ENCODE measurements at regions of chr10 and their contacts with region 1.

Region 1: DNA sequence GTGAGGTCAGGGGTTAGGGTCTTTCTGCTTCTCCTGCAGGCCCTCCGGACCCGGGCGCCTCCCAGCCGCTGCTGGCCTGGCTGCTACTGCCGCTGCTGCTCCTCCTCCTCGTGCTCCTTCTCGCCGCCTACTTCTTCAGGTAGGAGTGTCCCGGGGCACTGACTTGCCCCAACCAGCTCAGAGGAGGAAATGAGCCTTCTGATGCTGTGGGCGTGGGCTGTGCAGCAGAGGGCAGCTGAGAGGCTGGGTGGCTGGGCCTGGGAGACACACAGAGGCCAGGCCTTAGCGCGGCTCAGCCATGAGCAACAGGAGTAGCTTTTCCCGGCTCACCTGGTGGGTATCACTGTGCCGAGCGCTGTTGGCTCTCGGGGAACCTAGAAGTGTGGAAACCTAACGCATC is 78.9 kb downstream of the MKI67 start:
- DNase-seq: peak; percentile 52 to 90 (median 81)
- ATAC-seq: peak; percentile 97 to 98 (median 98)
- H3K4me3 ChIP-seq: peak overlapping the region; percentile 57 to 64
- H3K4me3 Mint-ChIP-seq: peak overlapping the region; percentile 84 to 95 (median 93)
- H3K27ac ChIP-seq: peak overlapping the region; percentile 93
- H3K27ac Mint-ChIP-seq: peak overlapping the region; percentile 92 to 97
- H3K4me1 ChIP-seq: peaks cover 16 to 67% of the 10 kb centered on the region in 2 experiments
- H3K4me1 Mint-ChIP-seq: peaks cover 59 to 73% (median 63%) of the 10 kb centered on the region in 3 donors
- H3K27me3 ChIP-seq: no peaks in the 10 kb centered on the region
- H3K27me3 Mint-ChIP-seq: no peaks in the 10 kb centered on the region

Region 2: DNA sequence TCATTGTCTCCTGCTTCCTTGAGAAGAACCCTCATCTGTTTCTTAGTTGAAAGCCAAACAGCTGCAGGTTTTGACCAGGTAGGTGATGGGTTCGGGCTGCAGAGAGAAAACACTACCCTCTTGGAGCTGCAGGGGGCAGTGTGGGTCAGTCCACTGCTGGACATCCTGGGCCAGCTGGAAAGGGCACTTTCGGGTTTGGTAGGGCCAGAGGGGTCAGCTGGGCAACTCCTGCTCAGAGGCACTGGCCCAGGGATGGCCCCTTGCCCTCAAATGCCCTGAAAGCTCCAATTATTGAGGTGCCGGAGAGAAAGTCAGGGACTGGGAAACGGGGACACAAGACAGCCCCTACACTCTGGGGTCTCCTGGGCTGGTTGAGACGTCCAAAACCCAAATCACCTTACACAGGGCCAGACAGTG is 11.8 kb before region 1 on chr10:
- CTCF ChIA-PET with region 1: interaction called, 6 to 15 read pairs
- POLR2A ChIA-PET with region 1: interaction called in 1 of 2 experiments, 9 read pairs
- DNase-seq: peak in 30 of 35 experiments; percentile 17 to 78 (median 52)
- ATAC-seq: peak; percentile 65 to 77 (median 72)
- H3K4me3 ChIP-seq: no peak overlapping the region
- H3K4me3 Mint-ChIP-seq: no peak overlapping the region
- H3K27ac ChIP-seq: no peak overlapping the region
- H3K27ac Mint-ChIP-seq: no peak overlapping the region
- H3K4me1 ChIP-seq: peaks cover 0 to 4% of the 10 kb centered on the region in 2 experiments
- H3K4me1 Mint-ChIP-seq: peaks cover 0 to 5% (median 2%) of the 10 kb centered on the region in 3 donors
- H3K27me3 ChIP-seq: no peaks in the 10 kb centered on the region
- H3K27me3 Mint-ChIP-seq: no peaks in the 10 kb centered on the region

Region 3: DNA sequence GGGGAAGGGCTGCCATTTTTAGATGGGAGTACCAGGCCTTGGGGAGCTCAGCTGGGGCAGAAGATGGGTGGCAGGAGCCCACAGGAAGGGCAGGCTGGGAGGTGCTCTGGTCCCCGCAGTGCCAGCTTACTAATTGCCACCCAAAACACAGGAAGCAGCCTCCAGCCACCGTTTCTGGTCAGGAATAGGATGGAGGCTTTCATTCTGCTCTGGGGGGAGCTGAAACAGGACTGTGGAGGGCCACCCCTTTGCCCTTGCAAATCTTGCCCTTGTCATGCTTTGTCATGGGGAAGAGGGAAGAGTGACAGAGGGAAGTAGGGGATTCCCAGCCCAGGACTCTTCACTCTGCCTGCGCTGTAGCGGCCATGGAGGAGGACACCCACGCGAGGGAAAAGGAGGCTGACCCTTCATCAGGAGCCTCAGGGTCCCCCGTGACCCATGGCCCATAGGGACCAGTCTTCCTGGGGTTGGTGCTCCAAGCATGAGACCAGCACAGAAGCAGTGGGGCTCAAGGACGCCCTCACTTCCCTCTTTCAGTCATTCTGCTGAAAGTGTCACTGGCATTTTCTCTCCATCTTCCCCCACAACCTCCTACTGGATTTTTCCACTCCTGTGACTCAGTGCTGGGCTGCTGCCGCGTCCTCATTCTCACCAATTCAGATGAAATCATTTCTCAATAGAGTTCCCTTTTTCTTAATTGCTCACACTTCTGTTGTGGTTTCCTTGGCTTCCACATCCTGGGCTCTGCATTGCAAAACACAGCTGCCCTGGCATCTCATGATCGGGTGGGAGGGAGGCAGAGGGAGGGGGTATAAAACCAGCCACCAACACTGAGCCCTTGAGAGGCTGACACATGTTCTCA is 17.0 kb after region 1 on chr10:
- CTCF ChIA-PET with region 1: interaction called, 12 to 22 read pairs
- POLR2A ChIA-PET with region 1: interaction called, 17 to 62 read pairs
- DNase-seq: peak in 34 of 35 experiments; percentile 46 to 82 (median 70)
- ATAC-seq: peak; percentile 70 to 74 (median 72)
- H3K4me3 ChIP-seq: peak overlapping the region; percentile 27 to 44
- H3K4me3 Mint-ChIP-seq: peak overlapping the region; percentile 37 to 80 (median 73)
- H3K27ac ChIP-seq: peak overlapping the region; percentile 81
- H3K27ac Mint-ChIP-seq: peak overlapping the region; percentile 88 to 91
- H3K4me1 ChIP-seq: peaks cover 37 to 88% of the 10 kb centered on the region in 2 experiments
- H3K4me1 Mint-ChIP-seq: peaks cover 76 to 81% (median 77%) of the 10 kb centered on the region in 3 donors
- H3K27me3 ChIP-seq: no peaks in the 10 kb centered on the region
- H3K27me3 Mint-ChIP-seq: no peaks in the 10 kb centered on the region

Region 4: DNA sequence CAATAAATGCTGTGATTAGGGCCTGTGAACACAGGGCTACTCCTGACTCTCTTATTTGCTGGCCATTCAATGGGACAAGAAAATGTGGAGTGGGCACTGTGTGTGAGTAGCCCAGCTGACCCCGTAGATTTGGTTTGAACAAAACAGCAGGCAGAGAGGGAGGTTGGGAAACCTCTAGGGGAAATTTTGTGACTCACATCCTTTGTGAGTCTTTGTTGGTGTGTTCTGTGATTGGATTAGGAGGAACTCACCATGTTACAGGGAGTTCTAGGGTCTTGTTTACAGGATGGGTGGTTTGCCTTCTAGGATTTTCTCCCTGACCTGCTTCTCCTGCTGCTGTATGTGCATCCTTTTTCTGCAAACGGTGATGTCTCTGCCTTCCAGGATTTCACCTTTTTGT is 207.1 kb after region 1 on chr10:
- CTCF ChIA-PET with region 1: no interaction called
- POLR2A ChIA-PET with region 1: no interaction called
- DNase-seq: no peak
- ATAC-seq: no peak
- H3K4me3 ChIP-seq: no peak overlapping the region
- H3K4me3 Mint-ChIP-seq: no peak overlapping the region
- H3K27ac ChIP-seq: no peak overlapping the region
- H3K27ac Mint-ChIP-seq: no peak overlapping the region
- H3K4me1 ChIP-seq: no peaks in the 10 kb centered on the region
- H3K4me1 Mint-ChIP-seq: no peaks in the 10 kb centered on the region
- H3K27me3 ChIP-seq: peaks cover 0 to 4% of the 10 kb centered on the region in 2 experiments
- H3K27me3 Mint-ChIP-seq: peaks cover 3 to 10% of the 10 kb centered on the region in 2 donors

Region 5: DNA sequence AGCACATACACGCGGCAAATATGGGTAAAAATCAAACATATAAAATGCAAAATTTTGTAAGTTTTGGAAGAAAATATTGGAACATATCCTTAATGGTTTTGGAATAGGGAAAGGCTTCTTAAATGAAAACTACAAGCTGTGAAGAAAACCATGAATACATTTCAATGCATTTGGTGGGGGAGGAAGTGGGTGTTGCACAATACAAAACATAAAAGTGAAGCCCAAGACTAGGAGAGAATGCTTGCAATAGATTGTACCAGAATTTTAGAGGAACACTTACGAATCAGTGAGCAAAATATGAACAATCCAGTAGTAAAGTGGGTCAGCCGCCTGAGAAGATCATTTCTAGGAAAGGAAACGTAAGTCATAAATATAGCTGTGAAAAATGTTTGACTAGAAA is 401.4 kb after region 1 on chr10:
- CTCF ChIA-PET with region 1: no interaction called
- POLR2A ChIA-PET with region 1: no interaction called
- DNase-seq: no peak
- ATAC-seq: no peak
- H3K4me3 ChIP-seq: no peak overlapping the region
- H3K4me3 Mint-ChIP-seq: no peak overlapping the region
- H3K27ac ChIP-seq: no peak overlapping the region
- H3K27ac Mint-ChIP-seq: no peak overlapping the region
- H3K4me1 ChIP-seq: no peaks in the 10 kb centered on the region
- H3K4me1 Mint-ChIP-seq: no peaks in the 10 kb centered on the region
- H3K27me3 ChIP-seq: no peaks in the 10 kb centered on the region
- H3K27me3 Mint-ChIP-seq: peaks cover 2 to 8% of the 10 kb centered on the region in 2 donors

Region 6: GRCh38 chr10:129193148-129193547 is 1145.8 kb after region 1 on chr10:
- CTCF ChIA-PET with region 1: no interaction called
- POLR2A ChIA-PET with region 1: no interaction called
- DNase-seq: no peak
- ATAC-seq: no peak
- H3K4me3 ChIP-seq: no peak overlapping the region
- H3K4me3 Mint-ChIP-seq: no peak overlapping the region
- H3K27ac ChIP-seq: no peak overlapping the region
- H3K27ac Mint-ChIP-seq: no peak overlapping the region
- H3K4me1 ChIP-seq: no peaks in the 10 kb centered on the region
- H3K4me1 Mint-ChIP-seq: peaks cover 0 to 11% (median 0%) of the 10 kb centered on the region in 3 donors
- H3K27me3 ChIP-seq: peaks cover 0 to 11% of the 10 kb centered on the region in 2 experiments
- H3K27me3 Mint-ChIP-seq: peaks cover 10 to 21% of the 10 kb centered on the region in 2 donors

Measured in T-cell (primary cell).